ENCODE measurements at regions of chr14 and their contacts with region 1.

Region 1: GRCh38 chr14:30270200-30271161 is 288.5 kb upstream of the G2E3 start:
- DNase-seq: peak; percentile 95
- ATAC-seq: peak; percentile 99
- H3K4me3 Mint-ChIP-seq: peak overlapping the region; percentile 57
- H3K27ac Mint-ChIP-seq: no peak overlapping the region
- H3K4me1 Mint-ChIP-seq: peaks cover 26% of the 10 kb centered on the region
- H3K27me3 Mint-ChIP-seq: peaks cover 4% of the 10 kb centered on the region; the same call in 1 of the 2 replicates
- CTCF ChIP-seq: peak; percentile 67

Region 2: DNA sequence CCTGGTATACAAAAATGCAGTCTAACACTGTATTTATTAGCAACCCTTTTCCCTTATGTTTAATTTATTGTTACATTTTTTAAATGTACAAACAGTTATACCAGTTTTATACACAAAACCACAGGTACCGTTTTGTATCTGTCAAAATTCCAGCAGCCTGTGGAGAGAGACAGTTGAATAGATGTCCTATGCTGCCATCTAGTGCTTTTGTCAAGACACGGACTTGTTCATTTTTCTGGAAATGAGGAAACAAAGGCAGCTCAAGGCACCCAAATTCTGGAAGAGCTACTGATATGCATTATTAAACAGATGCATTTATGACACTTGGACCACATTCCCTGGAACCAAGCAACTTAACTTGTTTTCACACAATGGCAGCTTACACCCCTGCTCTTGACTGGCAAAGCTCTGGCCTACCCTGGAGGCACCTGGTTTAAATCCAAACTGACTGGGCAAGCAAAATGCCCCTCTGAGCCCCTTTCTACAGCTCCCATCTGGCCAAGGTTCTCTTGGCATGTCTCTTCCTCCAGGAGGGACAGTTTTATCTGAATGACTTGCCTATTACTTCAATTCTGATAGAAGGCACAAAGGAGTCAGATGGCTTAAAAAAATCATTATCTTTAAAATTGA is 55.9 kb before region 1 on chr14:
- CTCF ChIA-PET with region 1: interaction called, 37 read pairs
- POLR2A ChIA-PET with region 1: no interaction called
- DNase-seq: no peak
- ATAC-seq: peak; percentile 70
- H3K4me3 Mint-ChIP-seq: no peak overlapping the region
- H3K27ac Mint-ChIP-seq: no peak overlapping the region
- H3K4me1 Mint-ChIP-seq: no peaks in the 10 kb centered on the region
- H3K27me3 Mint-ChIP-seq: no peaks in the 10 kb centered on the region
- CTCF ChIP-seq: peak; percentile 51

Region 3: GRCh38 chr14:30252151-30252550 is 18.3 kb before region 1 on chr14:
- CTCF ChIA-PET with region 1: interaction called, 18 read pairs
- POLR2A ChIA-PET with region 1: no interaction called
- DNase-seq: no peak
- ATAC-seq: no peak; the same call in 1 of the 2 replicates
- H3K4me3 Mint-ChIP-seq: no peak overlapping the region
- H3K27ac Mint-ChIP-seq: no peak overlapping the region
- H3K4me1 Mint-ChIP-seq: peaks cover 20% of the 10 kb centered on the region
- H3K27me3 Mint-ChIP-seq: no peaks in the 10 kb centered on the region
- CTCF ChIP-seq: no peak

Region 4: DNA sequence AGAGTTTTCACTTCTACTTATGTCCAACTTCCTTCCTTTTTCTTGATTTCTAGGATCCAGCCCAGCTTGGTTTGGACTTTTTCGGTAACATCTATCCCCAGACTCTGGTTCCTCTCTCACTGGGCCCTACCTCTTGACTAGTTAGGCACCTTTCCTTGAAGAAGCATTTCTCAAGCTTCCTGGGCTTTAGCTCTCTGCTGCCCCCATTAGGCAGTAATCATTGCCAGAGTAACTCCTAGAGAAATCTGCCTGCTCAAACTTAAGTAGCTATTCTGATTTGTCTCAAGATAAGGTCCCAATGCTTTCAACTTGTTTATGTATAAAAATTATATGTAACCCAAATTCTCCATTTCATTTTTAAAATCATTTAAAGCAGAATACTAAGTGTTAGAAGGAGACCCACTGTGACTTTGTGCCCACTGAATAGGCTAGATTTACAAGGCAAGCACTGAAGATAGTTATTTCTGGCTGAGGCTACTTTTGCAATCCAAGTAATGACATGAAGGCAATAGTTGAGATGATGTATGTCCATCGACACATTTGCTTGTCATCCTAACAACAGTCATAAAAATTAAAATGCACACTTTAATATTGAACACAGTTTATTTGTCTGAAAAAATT is 13.5 kb after region 1 on chr14:
- CTCF ChIA-PET with region 1: interaction called, 150 read pairs
- POLR2A ChIA-PET with region 1: no interaction called
- DNase-seq: peak; percentile 73
- ATAC-seq: peak; percentile 93
- H3K4me3 Mint-ChIP-seq: no peak overlapping the region
- H3K27ac Mint-ChIP-seq: no peak overlapping the region
- H3K4me1 Mint-ChIP-seq: no peaks in the 10 kb centered on the region
- H3K27me3 Mint-ChIP-seq: no peaks in the 10 kb centered on the region
- CTCF ChIP-seq: no peak; the same call in 1 of the 2 replicates

Region 5: DNA sequence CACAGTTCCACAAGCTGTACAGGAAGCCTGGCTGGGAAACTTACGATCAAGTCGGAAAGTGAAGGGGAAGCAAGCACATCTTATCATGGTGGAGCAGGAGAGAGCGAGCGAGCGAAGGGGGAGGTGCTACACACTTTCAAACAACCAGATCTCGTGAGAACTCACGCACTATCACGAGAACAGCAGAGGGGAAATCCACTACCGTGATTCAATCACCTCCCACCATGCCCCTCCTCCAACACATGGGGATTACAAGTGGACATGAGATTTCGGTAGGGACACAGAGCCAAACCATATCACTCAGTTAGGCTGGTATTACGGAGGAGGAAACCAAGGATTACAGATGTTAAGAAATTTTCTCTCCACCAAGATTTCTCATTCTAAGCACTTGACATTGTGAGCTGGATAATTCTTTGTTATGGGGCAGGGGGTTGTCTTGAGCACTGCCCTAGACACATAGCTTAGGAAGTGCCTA is 26.5 kb after region 1 on chr14:
- CTCF ChIA-PET with region 1: interaction called, 11 read pairs
- POLR2A ChIA-PET with region 1: no interaction called
- DNase-seq: no peak
- ATAC-seq: no peak
- H3K4me3 Mint-ChIP-seq: no peak overlapping the region
- H3K27ac Mint-ChIP-seq: 0 out of 2 replicates have a peak overlapping the region, but pooled peaks have one; percentile 10
- H3K4me1 Mint-ChIP-seq: peaks cover 4% of the 10 kb centered on the region
- H3K27me3 Mint-ChIP-seq: no peaks in the 10 kb centered on the region
- CTCF ChIP-seq: no peak

Region 6: DNA sequence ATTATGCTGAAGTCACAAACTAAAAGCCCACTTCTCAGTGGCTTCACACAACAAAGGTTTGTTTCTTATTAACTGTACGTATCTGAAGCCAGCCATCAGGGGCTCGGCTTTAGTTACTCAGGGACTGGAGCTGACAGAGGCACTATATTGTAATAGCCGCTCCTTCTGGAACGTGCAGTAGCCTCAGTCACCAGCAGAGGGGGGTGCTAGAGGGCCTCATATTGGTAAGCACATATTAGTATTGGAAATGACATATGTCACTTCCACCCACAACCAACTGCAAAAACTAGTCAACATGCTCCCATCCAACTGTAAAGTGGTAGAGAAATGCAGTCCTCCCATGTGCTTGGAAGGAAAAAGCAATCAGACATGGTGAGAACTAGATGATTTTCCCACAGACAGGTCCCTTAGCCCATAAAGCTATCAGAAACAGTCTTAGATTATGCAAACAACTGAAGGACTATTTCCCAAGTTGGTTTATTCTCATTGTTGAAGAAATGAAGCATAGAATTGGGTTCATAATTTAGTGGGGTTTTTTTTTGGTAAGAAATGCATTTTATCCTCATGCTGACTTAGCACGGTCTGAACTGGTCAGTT is 104.9 kb after region 1 on chr14:
- CTCF ChIA-PET with region 1: interaction called, 14 read pairs
- POLR2A ChIA-PET with region 1: no interaction called
- DNase-seq: peak; percentile 80
- ATAC-seq: peak; percentile 97
- H3K4me3 Mint-ChIP-seq: no peak overlapping the region
- H3K27ac Mint-ChIP-seq: no peak overlapping the region
- H3K4me1 Mint-ChIP-seq: peaks cover 6% of the 10 kb centered on the region
- H3K27me3 Mint-ChIP-seq: no peaks in the 10 kb centered on the region
- CTCF ChIP-seq: peak; percentile 78

Region 7: GRCh38 chr14:30521899-30522736 is 251.6 kb after region 1 on chr14:
- CTCF ChIA-PET with region 1: interaction called, 16 read pairs
- POLR2A ChIA-PET with region 1: no interaction called
- DNase-seq: no peak
- ATAC-seq: no peak
- H3K4me3 Mint-ChIP-seq: no peak overlapping the region
- H3K27ac Mint-ChIP-seq: no peak overlapping the region
- H3K4me1 Mint-ChIP-seq: peaks cover 3% of the 10 kb centered on the region; the same call in 1 of the 2 replicates
- H3K27me3 Mint-ChIP-seq: no peaks in the 10 kb centered on the region
- CTCF ChIP-seq: peak; percentile 52

Measured in WTC11 (cell line).